AG04450 (cell line): ENCODE measurements at regions of chr16 and their contacts with region 1.

Region 1: GRCh38 chr16:72400257-72400882 is 228.4 kb upstream of the PMFBP1 start:
- DNase-seq: peak; percentile 48
- H3K4me3 ChIP-seq: no peak overlapping the region
- H3K27ac ChIP-seq: no peak overlapping the region
- H3K27me3 ChIP-seq: no peaks in the 10 kb centered on the region
- CTCF ChIP-seq: peak; percentile 81

Region 2: DNA sequence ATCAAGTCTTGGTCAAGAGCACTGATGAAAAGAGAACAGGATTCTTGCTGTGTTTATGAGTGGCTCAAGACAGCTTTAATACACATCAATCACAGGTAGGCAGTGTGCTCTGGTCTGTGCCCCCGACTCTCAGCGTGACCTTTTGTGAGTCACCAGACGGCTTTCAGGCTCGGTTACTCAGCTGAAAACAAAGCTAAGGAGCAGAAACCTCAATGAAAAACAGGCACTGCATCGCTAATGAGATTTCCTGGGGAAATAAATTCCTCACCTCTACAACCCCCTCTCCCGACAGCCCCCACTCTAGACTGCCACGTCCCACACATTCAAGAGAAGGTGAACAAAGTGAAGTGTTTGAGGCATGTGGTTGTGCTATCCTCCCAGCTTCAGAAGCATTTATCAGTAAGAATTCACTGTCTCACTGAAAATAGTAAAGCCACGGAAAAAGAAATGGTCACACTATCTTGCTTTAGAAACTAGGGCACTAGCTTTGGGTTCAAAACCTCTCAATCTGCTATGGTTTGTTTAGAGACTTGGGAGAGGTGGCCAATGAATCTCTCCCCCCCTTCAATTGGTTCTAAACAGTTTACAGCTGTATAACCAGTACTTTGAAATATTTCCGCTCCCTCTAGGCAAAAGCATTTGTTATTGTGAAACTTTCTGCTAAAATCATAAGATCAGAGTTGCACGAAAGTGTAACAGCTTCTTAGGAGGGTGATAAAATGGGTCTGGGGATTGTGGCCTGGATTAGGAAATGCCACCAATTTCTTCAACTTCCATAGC is 28.9 kb before region 1 on chr16:
- CTCF ChIA-PET with region 1: interaction called, 19 read pairs
- POLR2A ChIA-PET with region 1: no interaction called
- DNase-seq: no peak
- H3K4me3 ChIP-seq: no peak overlapping the region
- H3K27ac ChIP-seq: no peak overlapping the region
- H3K27me3 ChIP-seq: no peaks in the 10 kb centered on the region
- CTCF ChIP-seq: no peak

Region 3: GRCh38 chr16:72389791-72390190 is 10.6 kb before region 1 on chr16:
- CTCF ChIA-PET with region 1: interaction called, 38 read pairs
- POLR2A ChIA-PET with region 1: no interaction called
- DNase-seq: no peak
- H3K4me3 ChIP-seq: no peak overlapping the region
- H3K27ac ChIP-seq: no peak overlapping the region
- H3K27me3 ChIP-seq: no peaks in the 10 kb centered on the region
- CTCF ChIP-seq: no peak

Region 4: DNA sequence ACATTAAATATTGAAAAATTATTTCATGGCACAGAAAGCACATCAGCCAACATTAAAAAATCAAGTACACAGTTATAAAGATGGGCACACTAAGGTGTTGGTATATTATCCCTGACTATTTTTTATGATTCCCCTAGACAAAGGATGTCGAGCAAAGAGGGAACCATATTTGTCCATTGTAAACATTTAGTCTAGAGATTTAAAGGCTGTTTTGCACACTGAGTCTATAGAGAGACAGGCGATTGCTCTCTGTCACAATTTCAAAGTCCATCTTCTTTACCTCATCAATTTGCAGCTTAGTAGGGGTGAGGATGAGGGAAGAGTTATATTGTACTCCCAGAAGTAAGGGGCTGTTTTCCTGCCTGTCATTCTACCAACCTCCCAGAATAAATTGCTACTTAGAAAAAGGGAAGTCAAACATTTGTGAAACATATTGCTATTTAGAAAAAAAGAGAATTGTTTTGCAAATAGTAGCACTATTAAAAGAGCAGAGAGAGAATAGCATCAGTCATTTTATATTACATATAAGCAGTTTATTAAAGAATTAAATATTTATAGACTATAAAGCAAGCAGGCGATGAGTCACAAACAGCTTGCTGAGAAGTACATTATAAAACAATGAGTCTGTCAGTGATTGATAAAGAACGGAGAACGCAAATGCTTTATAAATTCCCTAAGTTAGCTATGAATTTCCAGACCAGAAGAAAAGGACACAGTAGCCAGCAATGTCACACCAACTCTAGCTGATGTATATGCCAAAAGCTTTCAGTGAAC is 42.2 kb after region 1 on chr16:
- CTCF ChIA-PET with region 1: interaction called, 18 read pairs
- POLR2A ChIA-PET with region 1: no interaction called
- DNase-seq: no peak
- H3K4me3 ChIP-seq: no peak overlapping the region
- H3K27ac ChIP-seq: no peak overlapping the region
- H3K27me3 ChIP-seq: no peaks in the 10 kb centered on the region
- CTCF ChIP-seq: no peak

Region 5: GRCh38 chr16:73122604-73123391 is 722.4 kb after region 1 on chr16:
- CTCF ChIA-PET with region 1: no interaction called
- POLR2A ChIA-PET with region 1: no interaction called
- DNase-seq: no peak
- H3K4me3 ChIP-seq: no peak overlapping the region
- H3K27ac ChIP-seq: no peak overlapping the region
- H3K27me3 ChIP-seq: no peaks in the 10 kb centered on the region
- CTCF ChIP-seq: no peak